ENCODE measurements at regions of chr14 and their contacts with region 1.

Region 1: DNA sequence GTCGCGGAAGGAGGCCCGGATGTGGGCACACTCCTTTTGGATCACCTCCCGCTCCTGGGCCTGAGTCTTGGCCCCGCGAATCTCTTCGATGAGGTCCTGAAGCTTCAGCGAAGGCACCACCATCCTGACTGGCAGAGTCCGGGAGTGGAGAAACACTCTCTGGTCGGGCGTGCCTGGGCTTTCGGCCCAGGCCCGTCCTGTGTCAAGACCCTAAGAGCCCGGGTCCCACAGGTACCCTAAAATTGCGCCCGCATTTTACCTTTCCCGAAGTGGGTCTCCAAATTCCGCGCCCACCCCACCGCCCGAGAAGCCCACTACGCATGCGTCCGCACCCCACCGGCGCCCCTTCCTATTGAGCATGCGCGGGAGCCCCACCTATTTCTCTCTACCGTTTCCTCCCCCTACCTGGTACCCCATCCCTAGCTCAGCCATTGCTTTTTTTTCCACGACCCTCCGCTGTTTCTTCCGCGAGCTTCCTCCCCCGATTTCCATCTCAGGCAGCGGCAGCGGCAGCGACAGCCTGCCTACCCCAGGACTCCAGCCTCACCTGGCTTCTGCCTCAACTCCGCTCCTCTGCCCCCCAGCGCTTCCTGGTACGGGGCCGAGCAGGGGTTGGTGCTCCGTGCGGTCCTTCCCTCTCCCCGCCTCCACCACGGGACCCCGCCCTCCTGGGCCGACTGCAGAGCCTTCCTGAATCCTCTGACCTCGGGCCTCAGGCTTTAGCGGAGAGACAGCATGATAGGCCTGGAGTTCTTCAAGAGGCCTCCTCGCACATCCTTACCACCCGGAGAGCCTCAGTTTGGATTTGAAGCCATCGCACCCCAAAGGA is at the start of gene AP1G2:
- DNase-seq: peak; percentile 91 to 92
- ATAC-seq: peak; percentile 80
- H3K4me3 ChIP-seq: peak within 1 kb of the TSS; percentile 14 to 43
- H3K27ac ChIP-seq: no peak within 1 kb of the TSS
- H3K4me1 ChIP-seq: no peaks in the 10 kb centered on the region
- H3K27me3 ChIP-seq: no peaks in the 10 kb centered on the region
- total RNA-seq, gene AP1G2: 36.9 to 78.6 TPM

Region 2: GRCh38 chr14:23269193-23269592 is 298.2 kb before region 1 on chr14:
- intact Hi-C with region 1: loop called in 1 of 2 experiments (anchors 10 kb)
- DNase-seq: no peak
- ATAC-seq: no peak
- H3K4me3 ChIP-seq: no peak overlapping the region
- H3K27ac ChIP-seq: no peak overlapping the region
- H3K4me1 ChIP-seq: no peaks in the 10 kb centered on the region
- H3K27me3 ChIP-seq: no peaks in the 10 kb centered on the region

Region 3: GRCh38 chr14:23483236-23483854 is 84.1 kb before region 1 on chr14:
- intact Hi-C with region 1: loop called in 1 of 2 experiments (anchors 2 kb)
- DNase-seq: no peak
- ATAC-seq: no peak
- H3K4me3 ChIP-seq: no peak overlapping the region
- H3K27ac ChIP-seq: no peak overlapping the region
- H3K4me1 ChIP-seq: no peaks in the 10 kb centered on the region
- H3K27me3 ChIP-seq: no peaks in the 10 kb centered on the region

Region 4: GRCh38 chr14:23621204-23621931 is 54.0 kb after region 1 on chr14:
- intact Hi-C with region 1: no loop called
- DNase-seq: no peak
- ATAC-seq: no peak
- H3K4me3 ChIP-seq: no peak overlapping the region
- H3K27ac ChIP-seq: no peak overlapping the region
- H3K4me1 ChIP-seq: no peaks in the 10 kb centered on the region
- H3K27me3 ChIP-seq: no peaks in the 10 kb centered on the region